HepG2 (cell line): ENCODE measurements at regions of chr1 and their contacts with region 1.

Region 1: GRCh38 chr1:15128520-15129313 is 24.8 kb upstream of the TMEM51 start:
- DNase-seq: peak; percentile 59
- ATAC-seq: peak; percentile 99
- H3K4me3 ChIP-seq: no peak overlapping the region
- H3K27ac ChIP-seq: no peak overlapping the region
- H3K4me1 ChIP-seq: no peaks in the 10 kb centered on the region
- H3K27me3 ChIP-seq: no peaks in the 10 kb centered on the region
- CTCF ChIP-seq: peak; percentile 95
- EP300 ChIP-seq: no peak
- POLR2A ChIP-seq: no peak
- RAD21 ChIP-seq: peak; percentile 95

Region 2: DNA sequence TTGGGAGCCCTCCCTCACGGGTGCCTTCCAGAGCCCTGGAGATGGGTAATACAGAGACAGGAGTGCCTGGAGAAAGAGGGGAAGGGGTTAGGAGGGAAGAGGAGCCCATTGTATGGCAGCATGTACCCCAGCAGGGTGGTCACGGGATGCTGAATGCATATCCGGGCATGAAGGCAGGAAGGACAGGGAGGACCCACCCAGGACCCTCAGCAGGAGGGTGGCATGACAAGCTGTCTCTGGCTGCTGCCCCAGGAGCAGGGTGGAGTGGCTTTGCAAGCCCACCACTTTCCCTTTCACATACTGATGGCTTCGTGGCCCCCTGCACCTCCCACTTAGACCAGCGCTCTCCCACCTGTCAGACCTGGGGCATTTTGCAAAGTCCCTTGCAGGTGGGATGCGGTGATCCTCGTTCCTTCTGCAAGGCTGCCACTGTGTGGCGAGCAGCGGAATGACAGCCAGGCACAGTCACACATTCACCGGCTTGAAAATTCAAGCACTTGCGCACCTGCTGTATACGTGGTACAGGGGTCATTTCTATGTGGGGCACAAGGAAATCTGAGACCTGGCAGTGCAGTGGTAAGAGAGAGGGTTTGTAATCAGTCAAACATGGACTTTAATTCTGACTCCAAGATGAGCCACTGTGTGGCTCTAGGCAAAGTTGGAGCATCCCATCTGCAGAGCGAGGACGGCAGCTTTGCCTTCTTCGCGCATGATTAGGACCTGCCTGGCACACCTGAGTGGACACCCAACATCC is 28.4 kb before region 1 on chr1:
- CTCF ChIA-PET with region 1: no interaction called
- POLR2A ChIA-PET with region 1: no interaction called
- in situ Hi-C with region 1: no loop called
- intact Hi-C with region 1: no loop called
- DNase-seq: peak; percentile 20
- ATAC-seq: peak; percentile 79
- H3K4me3 ChIP-seq: no peak overlapping the region
- H3K27ac ChIP-seq: no peak overlapping the region
- H3K4me1 ChIP-seq: no peaks in the 10 kb centered on the region
- H3K27me3 ChIP-seq: peaks cover 0 to 52% of the 10 kb centered on the region in 2 experiments; a peak in 3 of 5 replicates
- CTCF ChIP-seq: peak; percentile 96
- EP300 ChIP-seq: no peak
- POLR2A ChIP-seq: no peak
- RAD21 ChIP-seq: peak; percentile 85

Region 3: GRCh38 chr1:15188130-15188524 is 59.4 kb after region 1 on chr1:
- CTCF ChIA-PET with region 1: no interaction called
- POLR2A ChIA-PET with region 1: no interaction called
- in situ Hi-C with region 1: no loop called
- intact Hi-C with region 1: loop called (anchors 1 kb)
- DNase-seq: no peak
- ATAC-seq: no peak
- H3K4me3 ChIP-seq: no peak overlapping the region
- H3K27ac ChIP-seq: peak overlapping the region; percentile 4
- H3K4me1 ChIP-seq: peaks cover 90% of the 10 kb centered on the region
- H3K27me3 ChIP-seq: no peaks in the 10 kb centered on the region
- CTCF ChIP-seq: no peak
- EP300 ChIP-seq: no peak
- POLR2A ChIP-seq: no peak
- RAD21 ChIP-seq: no peak

Region 4: DNA sequence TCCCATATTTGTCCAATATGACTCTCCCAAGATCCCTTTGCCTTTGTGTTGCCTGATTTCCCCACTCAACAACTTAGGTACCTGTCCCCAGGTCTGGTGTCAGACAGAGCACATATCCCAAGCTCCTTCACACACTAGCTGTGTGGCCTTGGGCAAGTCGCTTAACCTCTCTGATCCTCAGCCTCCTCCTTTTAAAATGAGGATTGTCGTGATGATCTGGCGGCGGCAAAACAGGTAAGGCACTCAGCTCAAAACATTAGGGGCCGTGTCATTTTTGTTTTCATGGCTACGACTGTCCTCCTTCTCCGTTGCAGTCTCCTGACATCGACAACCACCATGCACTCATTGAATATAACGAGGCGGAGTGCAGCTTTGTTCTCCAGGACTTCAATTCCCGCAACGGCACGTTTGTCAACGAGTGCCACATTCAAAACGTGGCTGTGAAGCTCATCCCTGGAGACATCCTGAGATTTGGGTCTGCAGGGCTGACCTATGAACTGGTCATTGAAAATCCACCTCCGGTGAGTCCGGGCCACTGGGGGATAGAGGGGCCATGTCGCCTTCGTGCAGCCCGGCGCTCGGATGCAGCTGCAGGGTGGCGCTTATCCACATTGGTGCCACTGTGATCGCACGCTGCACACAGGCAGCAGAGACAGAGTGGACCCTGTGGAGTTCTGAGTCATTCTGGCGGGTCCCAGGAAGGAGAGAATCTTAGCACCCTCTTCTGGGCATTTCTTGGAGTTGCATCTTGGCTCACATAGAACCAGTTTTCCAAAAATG is 143.5 kb after region 1 on chr1:
- CTCF ChIA-PET with region 1: interaction called, 53 read pairs
- POLR2A ChIA-PET with region 1: no interaction called
- in situ Hi-C with region 1: loop called (anchors 5 kb)
- intact Hi-C with region 1: loop called (anchors 1 kb)
- DNase-seq: peak; percentile 82
- ATAC-seq: peak; percentile 98
- H3K4me3 ChIP-seq: peak overlapping the region in 1 of 3 experiments; percentile 38; a peak in 2 of 6 replicates
- H3K27ac ChIP-seq: no peak overlapping the region
- H3K4me1 ChIP-seq: peaks cover 21% of the 10 kb centered on the region
- H3K27me3 ChIP-seq: peaks cover 2 to 10% of the 10 kb centered on the region in 2 experiments; a peak in 2 of 5 replicates
- CTCF ChIP-seq: peak; percentile 94
- EP300 ChIP-seq: no peak
- POLR2A ChIP-seq: no peak
- RAD21 ChIP-seq: peak; percentile 92

Region 5: GRCh38 chr1:15304701-15305467 is 176.2 kb after region 1 on chr1:
- CTCF ChIA-PET with region 1: interaction called, 19 read pairs
- POLR2A ChIA-PET with region 1: interaction called, 3 read pairs
- in situ Hi-C with region 1: loop called (anchors 10 kb)
- intact Hi-C with region 1: loop called (anchors 1 kb)
- DNase-seq: peak; percentile 55
- ATAC-seq: peak; percentile 87
- H3K4me3 ChIP-seq: no peak overlapping the region
- H3K27ac ChIP-seq: no peak overlapping the region
- H3K4me1 ChIP-seq: peaks cover 19% of the 10 kb centered on the region
- H3K27me3 ChIP-seq: peaks cover 1 to 7% of the 10 kb centered on the region in 2 experiments; a peak in 3 of 5 replicates
- CTCF ChIP-seq: peak; percentile 94
- EP300 ChIP-seq: no peak
- POLR2A ChIP-seq: no peak
- RAD21 ChIP-seq: peak; percentile 89